PC-3 (cell line): ENCODE measurements at regions of chr13 and their contacts with region 1.

Region 1: DNA sequence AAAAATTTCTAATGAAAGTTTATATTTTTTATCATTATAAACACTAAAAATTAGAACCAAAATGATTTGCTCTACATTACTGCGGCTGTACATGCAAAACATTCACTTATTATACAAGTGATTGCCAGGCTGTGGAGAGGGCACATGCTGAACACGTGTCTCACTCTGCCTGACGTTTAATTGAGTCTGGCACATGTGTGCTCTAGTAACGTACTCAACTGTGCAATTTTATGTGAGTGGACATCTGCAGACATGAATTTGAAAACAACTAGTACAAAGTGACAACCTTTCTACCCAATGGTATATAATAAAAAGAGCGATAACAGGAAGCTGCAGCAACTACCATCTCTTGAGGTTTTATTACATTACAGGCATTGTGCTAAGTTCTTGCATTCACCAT is 341.4 kb downstream of the KLF12 start:
- DNase-seq: no peak
- ATAC-seq: no peak
- H3K4me3 ChIP-seq: no peak overlapping the region
- H3K27ac ChIP-seq: no peak overlapping the region
- H3K4me1 ChIP-seq: no peaks in the 10 kb centered on the region
- H3K27me3 ChIP-seq: no peaks in the 10 kb centered on the region
- CTCF ChIP-seq: no peak

Region 2: DNA sequence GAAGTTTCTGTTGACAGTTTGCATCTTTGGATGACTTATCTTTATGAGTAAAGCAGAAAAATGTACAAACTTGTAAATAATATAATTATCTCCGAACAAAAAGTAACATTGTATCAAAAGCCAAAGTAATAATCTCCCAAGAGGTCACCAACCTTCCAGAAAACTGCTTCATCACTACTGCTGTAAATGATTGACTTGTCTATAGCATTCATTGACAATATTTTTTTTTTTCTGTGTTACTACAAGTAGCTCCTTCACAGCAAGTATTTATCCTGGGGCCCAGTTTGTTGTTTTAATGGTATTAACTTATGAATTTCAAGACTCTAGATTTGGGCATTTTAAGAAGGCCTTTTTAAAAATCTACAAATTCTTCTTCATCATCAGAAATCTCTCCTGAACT is 99.0 kb after region 1 on chr13:
- CTCF ChIA-PET with region 1: no interaction called
- POLR2A ChIA-PET with region 1: no interaction called
- intact Hi-C with region 1: no loop called
- DNase-seq: no peak
- ATAC-seq: no peak
- H3K4me3 ChIP-seq: no peak overlapping the region
- H3K27ac ChIP-seq: no peak overlapping the region
- H3K4me1 ChIP-seq: no peaks in the 10 kb centered on the region
- H3K27me3 ChIP-seq: no peaks in the 10 kb centered on the region
- CTCF ChIP-seq: no peak

Region 3: GRCh38 chr13:74423434-74423833 is 630.6 kb after region 1 on chr13:
- CTCF ChIA-PET with region 1: no interaction called
- POLR2A ChIA-PET with region 1: interaction called, 10 read pairs
- intact Hi-C with region 1: no loop called
- DNase-seq: no peak
- ATAC-seq: no peak
- H3K4me3 ChIP-seq: no peak overlapping the region
- H3K27ac ChIP-seq: no peak overlapping the region
- H3K4me1 ChIP-seq: no peaks in the 10 kb centered on the region
- H3K27me3 ChIP-seq: no peaks in the 10 kb centered on the region
- CTCF ChIP-seq: no peak